Activated CD4-positive, alpha-beta T cell treated with anti-CD3 and anti-CD28 coated beads for 36 hours (primary cell): ENCODE measurements at regions of chr16 and their contacts with region 1.

Region 1: GRCh38 chr16:22297114-22297878 is at the start of gene POLR3E:
- DNase-seq: peak; percentile 100
- ATAC-seq: peak; percentile 87
- H3K4me3 Mint-ChIP-seq: peak within 1 kb of the TSS; percentile 93
- H3K27ac Mint-ChIP-seq: peak within 1 kb of the TSS; percentile 96
- H3K4me1 Mint-ChIP-seq: peaks cover 38% of the 10 kb centered on the region
- H3K27me3 Mint-ChIP-seq: no peaks in the 10 kb centered on the region
- total RNA-seq, gene POLR3E: 70.9 to 87.4 TPM

Region 2: DNA sequence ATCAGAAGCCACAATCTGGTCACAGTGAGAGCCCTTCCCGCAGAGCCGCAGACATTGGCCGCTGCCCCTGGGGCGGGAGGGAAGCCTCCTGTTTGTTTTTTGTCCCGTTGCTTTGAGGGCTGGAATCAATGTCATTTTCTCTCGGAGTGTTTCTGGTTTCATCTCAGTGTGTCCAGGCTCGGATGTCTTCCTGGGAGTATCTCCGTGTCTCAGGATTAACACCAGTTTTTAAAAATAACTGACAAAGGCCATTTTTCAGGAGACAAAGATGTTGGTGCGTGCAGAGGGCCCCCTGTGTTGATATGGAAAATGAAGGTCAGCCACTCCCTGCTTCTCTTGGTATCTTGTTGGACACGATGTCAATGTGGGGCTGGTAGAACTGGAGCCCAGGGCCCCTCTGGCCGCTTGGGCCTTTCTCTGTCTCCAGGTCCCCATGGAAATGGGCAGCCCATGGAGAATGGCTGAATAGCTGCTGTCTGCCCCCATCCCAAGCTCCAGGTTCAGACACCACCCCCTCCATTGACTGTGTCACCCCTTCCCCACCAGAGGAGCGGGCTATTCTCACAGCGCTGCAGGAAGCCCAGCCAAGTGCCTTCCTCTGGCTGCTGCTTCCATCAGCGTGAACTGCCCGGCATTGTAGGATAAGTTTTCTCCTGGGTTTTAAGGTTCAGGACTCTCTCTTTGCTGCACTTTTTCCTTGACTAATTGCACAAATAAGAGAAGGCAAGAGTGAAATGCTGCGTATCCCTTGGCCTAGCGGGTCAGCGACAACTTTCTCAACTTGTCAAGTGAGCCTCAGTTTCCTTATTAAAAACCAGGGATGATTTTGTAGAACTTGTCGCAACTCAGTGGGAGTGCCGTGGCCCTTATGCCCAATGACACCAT is 770.1 kb before region 1 on chr16:
- CTCF ChIA-PET with region 1: no interaction called
- POLR2A ChIA-PET with region 1: no interaction called
- intact Hi-C with region 1: loop called in 1 of 2 experiments (anchors 5 kb)
- DNase-seq: no peak
- ATAC-seq: no peak
- H3K4me3 Mint-ChIP-seq: no peak overlapping the region
- H3K27ac Mint-ChIP-seq: no peak overlapping the region
- H3K4me1 Mint-ChIP-seq: no peaks in the 10 kb centered on the region
- H3K27me3 Mint-ChIP-seq: no peaks in the 10 kb centered on the region

Region 3: DNA sequence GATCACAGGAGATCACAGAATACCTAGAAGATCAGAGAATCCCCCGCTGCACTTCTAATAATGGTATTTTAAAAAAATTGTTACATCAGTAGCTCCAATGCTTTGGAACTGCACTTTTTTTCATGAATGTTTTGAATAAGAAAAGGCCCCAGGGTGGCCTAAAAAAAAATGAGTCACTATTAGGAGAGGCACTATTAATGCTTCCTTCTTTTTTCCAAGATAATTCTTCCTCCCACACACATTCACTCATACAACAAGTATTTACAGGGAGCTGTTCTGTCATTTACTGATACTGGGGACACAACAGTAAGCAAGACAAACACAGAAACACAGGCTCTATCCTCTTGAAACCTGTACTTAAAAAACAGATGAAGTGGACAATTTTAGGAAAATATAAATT is 295.7 kb before region 1 on chr16:
- CTCF ChIA-PET with region 1: interaction called, 3 read pairs
- POLR2A ChIA-PET with region 1: no interaction called
- intact Hi-C with region 1: loop called (anchors 2 kb)
- DNase-seq: no peak
- ATAC-seq: no peak
- H3K4me3 Mint-ChIP-seq: no peak overlapping the region
- H3K27ac Mint-ChIP-seq: no peak overlapping the region
- H3K4me1 Mint-ChIP-seq: peaks cover 7% of the 10 kb centered on the region
- H3K27me3 Mint-ChIP-seq: no peaks in the 10 kb centered on the region

Region 4: GRCh38 chr16:22077700-22078313 is 219.5 kb before region 1 on chr16:
- CTCF ChIA-PET with region 1: no interaction called
- POLR2A ChIA-PET with region 1: no interaction called
- intact Hi-C with region 1: loop called in 1 of 2 experiments (anchors 2 kb)
- DNase-seq: peak; percentile 85
- ATAC-seq: peak; percentile 81
- H3K4me3 Mint-ChIP-seq: no peak overlapping the region
- H3K27ac Mint-ChIP-seq: no peak overlapping the region
- H3K4me1 Mint-ChIP-seq: peaks cover 9% of the 10 kb centered on the region
- H3K27me3 Mint-ChIP-seq: no peaks in the 10 kb centered on the region

Region 5: GRCh38 chr16:22206013-22206841 is 91.1 kb before region 1 on chr16 and contains the start of gene EEF2K:
- CTCF ChIA-PET with region 1: interaction called, 55 read pairs
- POLR2A ChIA-PET with region 1: interaction called, 3 read pairs
- intact Hi-C with region 1: loop called (anchors 1 kb)
- DNase-seq: peak; percentile 94
- ATAC-seq: peak; percentile 88
- H3K4me3 Mint-ChIP-seq: peak within 1 kb of the TSS; percentile 91
- H3K27ac Mint-ChIP-seq: peak within 1 kb of the TSS; percentile 89
- H3K4me1 Mint-ChIP-seq: peaks cover 36% of the 10 kb centered on the region
- H3K27me3 Mint-ChIP-seq: no peaks in the 10 kb centered on the region
- total RNA-seq, gene EEF2K: 23.9 to 28.3 TPM

Region 6: DNA sequence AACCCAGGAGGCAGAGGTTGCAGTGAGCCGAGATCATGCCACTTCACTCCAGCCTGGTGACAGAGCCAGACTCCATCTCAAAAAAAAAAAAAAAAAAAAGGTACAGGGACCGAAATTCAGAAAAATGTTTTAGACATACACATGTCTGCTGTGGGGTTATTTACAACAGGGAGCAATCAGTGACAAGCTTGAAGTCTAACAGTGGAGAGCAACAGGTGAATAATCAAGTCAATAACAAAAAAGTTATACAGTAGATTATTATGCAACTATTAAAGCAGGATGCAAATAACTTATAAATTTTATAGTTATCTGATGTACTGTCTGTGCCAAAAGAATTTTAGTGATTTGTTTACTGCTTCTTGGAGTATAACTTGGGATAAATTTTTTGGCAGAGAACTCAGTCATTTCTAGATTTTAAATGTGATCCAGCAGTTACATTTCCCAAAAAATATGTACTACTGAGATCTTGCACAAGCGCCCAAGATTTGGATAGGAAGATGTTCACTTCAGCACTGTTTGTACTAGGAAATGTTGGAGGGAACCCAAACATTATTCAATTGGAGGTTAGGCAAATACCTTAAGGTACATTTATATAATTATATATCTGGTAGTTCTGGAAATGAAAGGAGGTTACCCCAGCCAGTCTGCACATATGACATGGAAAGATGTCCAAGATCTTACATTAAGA is 57.1 kb before region 1 on chr16:
- CTCF ChIA-PET with region 1: no interaction called
- POLR2A ChIA-PET with region 1: interaction called, 3 read pairs
- intact Hi-C with region 1: loop called in 1 of 2 experiments (anchors 2 kb)
- DNase-seq: no peak
- ATAC-seq: no peak
- H3K4me3 Mint-ChIP-seq: no peak overlapping the region
- H3K27ac Mint-ChIP-seq: no peak overlapping the region
- H3K4me1 Mint-ChIP-seq: peaks cover 29% of the 10 kb centered on the region
- H3K27me3 Mint-ChIP-seq: no peaks in the 10 kb centered on the region

Region 7: DNA sequence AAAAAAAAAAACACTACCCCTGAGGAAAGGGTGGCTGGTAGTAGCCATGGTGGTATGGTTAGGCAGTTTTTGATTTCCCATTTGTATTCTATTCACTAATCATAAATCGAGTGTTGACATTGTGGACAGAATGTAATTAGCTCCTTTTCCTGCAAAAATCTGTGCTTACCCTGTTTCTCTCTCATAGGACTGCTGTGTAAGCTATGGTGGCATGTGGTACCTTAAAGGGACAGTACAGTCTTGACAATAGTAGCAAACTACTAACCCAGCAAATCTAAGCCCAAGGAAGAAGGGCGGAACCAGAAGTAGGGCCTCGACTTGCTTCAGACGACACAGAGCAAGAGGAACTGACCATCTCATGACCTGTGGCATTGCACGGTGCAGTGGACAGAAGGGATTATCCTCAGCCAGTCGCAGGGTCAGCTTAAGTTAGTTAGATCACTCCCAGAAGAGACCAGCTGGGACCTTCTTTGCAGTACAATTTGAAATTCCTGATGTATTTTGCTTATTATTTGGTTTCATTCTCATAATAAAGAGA is 36.2 kb after region 1 on chr16:
- CTCF ChIA-PET with region 1: no interaction called
- POLR2A ChIA-PET with region 1: no interaction called
- intact Hi-C with region 1: no loop called
- DNase-seq: no peak
- ATAC-seq: no peak
- H3K4me3 Mint-ChIP-seq: no peak overlapping the region
- H3K27ac Mint-ChIP-seq: no peak overlapping the region
- H3K4me1 Mint-ChIP-seq: peaks cover 15% of the 10 kb centered on the region
- H3K27me3 Mint-ChIP-seq: no peaks in the 10 kb centered on the region

Region 8: DNA sequence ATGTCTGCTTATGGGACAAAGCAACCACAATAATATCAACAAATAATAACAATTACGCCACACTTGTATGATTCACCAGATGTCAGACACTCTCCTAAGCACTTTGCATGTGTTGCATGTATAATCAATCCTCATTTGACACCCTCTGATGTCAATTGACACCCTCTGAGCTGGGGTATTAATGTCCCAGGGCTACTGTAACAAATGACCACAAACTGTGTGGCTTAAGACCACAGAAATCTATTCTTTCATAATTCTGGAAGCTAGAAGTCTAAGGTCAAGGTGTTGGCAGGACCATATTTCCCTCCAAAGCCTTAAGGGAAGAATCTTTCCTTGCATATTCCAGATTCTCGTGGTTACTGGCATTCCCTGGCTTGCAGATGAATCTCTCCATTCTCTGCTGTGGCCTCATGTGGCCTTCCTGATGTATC is 326.1 kb after region 1 on chr16:
- CTCF ChIA-PET with region 1: no interaction called
- POLR2A ChIA-PET with region 1: no interaction called
- intact Hi-C with region 1: no loop called
- DNase-seq: no peak
- ATAC-seq: no peak
- H3K4me3 Mint-ChIP-seq: no peak overlapping the region
- H3K27ac Mint-ChIP-seq: no peak overlapping the region
- H3K4me1 Mint-ChIP-seq: no peaks in the 10 kb centered on the region
- H3K27me3 Mint-ChIP-seq: no peaks in the 10 kb centered on the region